Right ventricle myocardium inferior (tissue), 1 donor: ENCODE measurements at regions of chr3 and their contacts with region 1.

Region 1: GRCh38 chr3:191051037-191051436 is 148.0 kb upstream of the OSTN start:
- DNase-seq: no peak
- ATAC-seq: no peak

Region 2: DNA sequence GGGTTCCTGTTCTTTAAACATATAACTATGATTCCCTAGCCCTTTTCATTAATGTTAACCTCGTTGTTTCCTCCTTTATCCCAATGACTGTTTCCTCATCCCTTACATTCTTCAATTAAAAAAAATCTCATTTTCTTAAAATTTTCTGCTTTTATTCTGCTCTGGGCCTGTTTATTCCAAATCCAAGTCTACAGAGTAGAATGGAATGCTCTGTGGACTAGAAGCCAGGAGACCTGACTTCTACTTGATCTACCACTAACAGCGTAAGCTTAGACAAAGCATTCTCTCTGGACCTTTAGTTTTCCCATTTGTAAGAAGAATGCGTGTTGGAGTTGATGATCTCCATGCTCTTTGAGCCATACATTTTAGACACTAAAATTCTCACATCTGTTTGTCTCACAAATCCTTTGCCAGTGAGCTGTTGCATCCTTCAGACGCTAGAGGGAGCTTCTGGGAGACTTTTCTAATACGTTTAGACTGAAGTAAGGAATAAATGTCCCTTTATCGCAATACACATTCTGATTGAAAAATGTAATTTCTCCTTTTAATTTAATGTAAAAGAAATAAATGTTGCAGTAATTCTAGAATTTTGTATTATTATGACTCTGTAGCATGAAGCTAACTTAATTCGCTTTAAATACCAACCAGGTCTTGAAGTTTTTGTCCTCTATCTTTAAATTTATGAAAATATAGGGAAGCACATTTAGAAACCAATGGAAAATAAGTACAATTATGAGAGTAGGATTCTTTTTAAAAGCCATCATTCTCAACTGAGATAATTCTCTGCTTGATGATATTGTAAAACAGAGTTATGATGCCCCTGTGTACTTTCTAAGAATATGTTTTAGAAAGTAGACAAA is 166.8 kb before region 1 on chr3:
- intact Hi-C with region 1: loop called (anchors 1 kb)
- DNase-seq: no peak
- ATAC-seq: no peak

Region 3: GRCh38 chr3:191030491-191030890 is 20.5 kb before region 1 on chr3:
- intact Hi-C with region 1: no loop called
- DNase-seq: no peak
- ATAC-seq: no peak

Region 4: GRCh38 chr3:191094057-191094845 is 43.2 kb after region 1 on chr3:
- intact Hi-C with region 1: no loop called
- DNase-seq: no peak
- ATAC-seq: no peak